Colonic mucosa (tissue), 4 donors: ENCODE measurements at regions of chr3 and their contacts with region 1.

Region 1: DNA sequence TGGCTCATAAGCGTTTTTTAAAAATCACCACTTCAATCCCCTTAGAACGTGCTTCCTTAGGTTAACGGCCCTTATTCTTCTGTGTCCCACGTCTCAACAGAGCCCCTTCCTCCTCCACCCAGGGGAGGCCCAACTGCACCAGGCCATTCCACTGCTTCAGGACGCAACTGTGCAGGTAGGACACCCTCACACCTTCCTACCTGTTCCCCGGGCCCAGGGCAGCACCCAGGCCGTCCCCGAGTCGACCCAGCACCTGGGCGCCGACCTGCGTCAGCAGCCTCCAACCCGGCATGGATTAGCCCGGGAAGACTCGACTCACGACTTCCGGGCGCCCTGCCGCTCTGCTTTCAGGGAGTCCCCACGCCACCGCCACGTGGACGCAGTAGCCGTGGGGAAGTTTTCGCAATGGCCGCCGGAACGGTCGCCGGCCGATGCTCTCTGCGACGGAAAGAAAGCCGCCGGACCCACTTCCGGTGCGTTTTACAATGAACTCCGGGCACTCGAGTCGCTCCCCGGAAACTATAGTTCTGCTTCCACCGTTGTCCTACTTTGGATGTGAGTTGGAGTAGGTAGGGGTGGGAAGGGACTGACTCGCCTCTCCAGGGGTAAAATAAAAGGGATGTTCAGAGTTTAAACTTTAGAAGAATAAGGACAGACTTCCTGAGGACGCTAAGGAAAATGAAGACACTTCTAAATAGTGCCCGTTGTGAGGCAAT is at the start of gene MRPL3:
- DNase-seq: peak; percentile 87
- H3K4me3 ChIP-seq: peak within 1 kb of the TSS; percentile 97
- H3K27ac ChIP-seq: peak within 1 kb of the TSS; percentile 63
- H3K4me1 ChIP-seq: peaks cover 4% of the 10 kb centered on the region
- H3K27me3 ChIP-seq: no peaks in the 10 kb centered on the region
- CTCF ChIP-seq: no peak
- total RNA-seq, gene MRPL3: 60.4 to 113 TPM

Region 2: DNA sequence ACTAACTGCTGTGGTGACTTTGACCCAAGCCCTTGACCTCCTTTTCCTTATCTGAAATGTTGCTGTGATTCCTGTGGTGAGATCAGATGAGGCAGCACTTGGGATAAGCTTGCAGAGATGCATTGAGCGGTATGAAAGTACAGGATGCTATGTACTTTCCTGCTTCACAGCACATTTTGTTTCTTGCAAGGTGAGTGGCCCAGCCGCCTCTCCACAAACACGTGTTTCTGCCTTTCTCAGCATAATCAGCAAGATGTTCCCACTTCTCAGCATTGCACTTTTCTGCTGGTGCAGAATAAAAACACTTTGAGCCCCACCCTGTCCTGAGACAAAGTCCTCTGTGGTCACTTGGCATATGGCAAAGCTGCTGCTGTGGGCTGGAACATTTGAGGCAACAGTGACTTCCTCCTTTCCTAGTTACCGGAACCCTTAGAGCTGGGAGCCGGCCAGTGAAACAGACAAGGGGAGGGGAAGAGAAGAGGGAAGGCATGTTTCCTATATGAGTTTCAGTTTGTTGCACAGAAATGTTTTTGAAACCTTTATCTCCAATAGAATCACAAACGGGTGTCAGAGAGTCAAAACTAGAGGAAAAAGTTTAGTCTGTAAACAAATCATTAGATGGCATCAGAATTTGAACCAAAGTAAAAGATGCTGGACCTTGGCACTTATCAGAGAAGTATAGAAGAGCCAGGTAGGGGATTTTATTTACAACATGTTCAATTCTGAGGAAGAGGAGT is 116.1 kb before region 1 on chr3:
- intact Hi-C with region 1: loop called (anchors 5 kb)
- DNase-seq: peak; percentile 86
- H3K4me3 ChIP-seq: no peak overlapping the region
- H3K27ac ChIP-seq: peak overlapping the region; percentile 68
- H3K4me1 ChIP-seq: peaks cover 15% of the 10 kb centered on the region
- H3K27me3 ChIP-seq: no peaks in the 10 kb centered on the region
- CTCF ChIP-seq: no peak

Region 3: DNA sequence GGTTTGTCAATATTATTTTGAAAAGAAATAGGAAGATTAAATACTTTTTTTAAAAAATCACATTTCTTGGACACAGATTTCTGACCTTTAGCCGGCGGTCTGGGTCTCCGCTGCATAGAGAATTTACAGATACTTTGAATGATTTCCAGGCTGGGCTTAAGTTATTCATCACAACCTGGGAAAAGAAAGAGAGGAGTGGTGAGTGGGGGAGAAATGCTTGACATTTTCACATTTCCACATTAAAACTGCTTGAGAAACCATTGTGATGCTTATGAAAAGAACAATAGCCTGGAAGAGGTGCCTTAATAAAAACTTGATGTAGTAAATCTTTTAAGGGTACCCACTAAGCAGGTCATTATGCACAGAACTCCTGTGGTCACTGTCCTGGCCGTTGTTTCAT is 166.9 kb after region 1 on chr3:
- intact Hi-C with region 1: no loop called
- DNase-seq: no peak
- H3K4me3 ChIP-seq: no peak overlapping the region
- H3K27ac ChIP-seq: no peak overlapping the region
- H3K4me1 ChIP-seq: no peaks in the 10 kb centered on the region
- H3K27me3 ChIP-seq: no peaks in the 10 kb centered on the region
- CTCF ChIP-seq: no peak